ENCODE measurements at regions of chr12 and their contacts with region 1.

Region 1: GRCh38 chr12:111812881-111813741 is 28.9 kb upstream of the MAPKAPK5 start:
- DNase-seq: peak; percentile 44
- ATAC-seq: peak; percentile 99
- H3K4me3 ChIP-seq: no peak overlapping the region
- H3K27ac ChIP-seq: no peak overlapping the region
- H3K4me1 ChIP-seq: peaks cover 3% of the 10 kb centered on the region; the same call in 1 of the 2 replicates
- H3K27me3 ChIP-seq: no peaks in the 10 kb centered on the region
- CTCF ChIP-seq: peak; percentile 80 to 89 (median 80)
- EP300 ChIP-seq: no peak
- POLR2A ChIP-seq: no peak
- RAD21 ChIP-seq: peak; percentile 83

Region 2: GRCh38 chr12:111685744-111686517 is 127.2 kb before region 1 on chr12 and contains the starts of genes ACAD10 and BRAP:
- CTCF ChIA-PET with region 1: interaction called, 17 read pairs
- POLR2A ChIA-PET with region 1: interaction called, 3 read pairs
- RAD21 ChIA-PET with region 1: interaction called, 10 read pairs
- SMC1A ChIA-PET with region 1: interaction called, 12 read pairs
- in situ Hi-C with region 1: loop called (anchors 5 kb)
- intact Hi-C with region 1: loop called (anchors 2 kb)
- DNase-seq: peak; percentile 89
- ATAC-seq: peak; percentile 98
- H3K4me3 ChIP-seq: peak within 1 kb of the TSS; percentile 99
- H3K27ac ChIP-seq: peak within 1 kb of the TSS; percentile 63
- H3K4me1 ChIP-seq: peaks cover 8% of the 10 kb centered on the region
- H3K27me3 ChIP-seq: no peaks in the 10 kb centered on the region
- CTCF ChIP-seq: peak in 2 of 3 experiments; percentile 8 to 13; a peak in 1 of 6 replicates
- EP300 ChIP-seq: no peak
- POLR2A ChIP-seq: peak; percentile 99
- RAD21 ChIP-seq: no peak
- polyA plus RNA-seq, gene ACAD10: 2.9 to 3.4 TPM
- polyA plus RNA-seq, gene BRAP: 2.3 to 3.4 TPM

Region 3: DNA sequence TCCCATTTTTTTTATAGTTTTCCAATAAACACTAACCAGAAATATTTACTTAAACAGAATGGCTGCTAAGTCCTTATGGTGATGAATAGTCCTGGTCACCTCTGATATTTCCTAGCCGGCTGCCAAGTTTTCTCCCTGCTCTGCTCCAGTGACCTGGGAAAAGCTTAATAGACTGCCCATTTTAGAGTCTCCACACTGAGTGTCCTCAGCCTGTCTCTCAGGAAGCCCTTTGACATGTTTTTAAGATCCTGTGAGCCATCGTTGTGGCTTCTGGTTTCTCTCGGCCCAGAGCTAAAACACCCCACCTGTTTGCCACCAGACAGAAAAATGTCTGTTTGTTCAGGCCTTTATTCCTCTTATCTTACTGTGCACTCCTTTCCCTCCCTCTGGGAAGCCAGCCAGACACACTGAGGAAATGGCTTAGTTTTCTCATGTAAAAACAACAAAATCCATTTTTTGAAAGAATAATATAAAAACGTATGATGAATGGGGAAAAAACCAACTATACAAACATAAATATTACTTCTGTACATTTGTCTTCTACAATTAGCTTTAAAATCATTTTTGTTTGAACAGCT is 71.8 kb before region 1 on chr12:
- CTCF ChIA-PET with region 1: interaction called, 11 read pairs
- POLR2A ChIA-PET with region 1: no interaction called
- RAD21 ChIA-PET with region 1: interaction called, 6 read pairs
- SMC1A ChIA-PET with region 1: interaction called, 4 read pairs
- in situ Hi-C with region 1: no loop called
- intact Hi-C with region 1: no loop called
- DNase-seq: no peak
- ATAC-seq: no peak
- H3K4me3 ChIP-seq: no peak overlapping the region
- H3K27ac ChIP-seq: no peak overlapping the region
- H3K4me1 ChIP-seq: no peaks in the 10 kb centered on the region
- H3K27me3 ChIP-seq: no peaks in the 10 kb centered on the region
- CTCF ChIP-seq: no peak
- EP300 ChIP-seq: no peak
- POLR2A ChIP-seq: no peak
- RAD21 ChIP-seq: no peak

Region 4: DNA sequence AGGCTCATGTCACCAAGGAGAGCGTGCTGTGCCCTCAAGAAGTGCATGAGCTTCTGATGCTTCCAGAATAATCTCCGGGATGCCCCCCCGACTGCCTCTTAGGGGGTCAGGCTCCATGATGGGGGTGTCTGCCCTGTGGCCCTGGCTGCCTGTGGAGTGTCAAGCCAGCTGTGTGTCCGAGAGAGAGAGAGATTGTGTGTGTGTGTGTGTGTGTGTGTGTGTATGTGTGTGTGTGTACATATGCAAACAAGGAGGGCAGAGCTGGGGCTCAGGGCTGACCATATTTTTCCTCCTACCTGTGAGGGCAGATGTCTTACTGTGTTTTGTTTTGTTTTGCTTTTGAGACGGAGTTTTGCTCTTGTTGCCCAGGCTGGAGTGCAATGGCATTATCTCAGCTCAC is 52.0 kb before region 1 on chr12:
- CTCF ChIA-PET with region 1: interaction called, 170 read pairs
- POLR2A ChIA-PET with region 1: interaction called, 4 read pairs
- RAD21 ChIA-PET with region 1: interaction called, 17 read pairs
- SMC1A ChIA-PET with region 1: interaction called, 15 read pairs
- in situ Hi-C with region 1: loop called (anchors 10 kb)
- intact Hi-C with region 1: loop called (anchors 1 kb)
- DNase-seq: no peak
- ATAC-seq: peak; percentile 54
- H3K4me3 ChIP-seq: peak overlapping the region; percentile 25; the same call in 1 of the 2 replicates
- H3K27ac ChIP-seq: peak overlapping the region; percentile 63; the same call in 1 of the 2 replicates
- H3K4me1 ChIP-seq: peaks cover 67% of the 10 kb centered on the region
- H3K27me3 ChIP-seq: no peaks in the 10 kb centered on the region
- CTCF ChIP-seq: no peak
- EP300 ChIP-seq: no peak; a peak in 1 of 4 replicates
- POLR2A ChIP-seq: no peak
- RAD21 ChIP-seq: no peak

Region 5: DNA sequence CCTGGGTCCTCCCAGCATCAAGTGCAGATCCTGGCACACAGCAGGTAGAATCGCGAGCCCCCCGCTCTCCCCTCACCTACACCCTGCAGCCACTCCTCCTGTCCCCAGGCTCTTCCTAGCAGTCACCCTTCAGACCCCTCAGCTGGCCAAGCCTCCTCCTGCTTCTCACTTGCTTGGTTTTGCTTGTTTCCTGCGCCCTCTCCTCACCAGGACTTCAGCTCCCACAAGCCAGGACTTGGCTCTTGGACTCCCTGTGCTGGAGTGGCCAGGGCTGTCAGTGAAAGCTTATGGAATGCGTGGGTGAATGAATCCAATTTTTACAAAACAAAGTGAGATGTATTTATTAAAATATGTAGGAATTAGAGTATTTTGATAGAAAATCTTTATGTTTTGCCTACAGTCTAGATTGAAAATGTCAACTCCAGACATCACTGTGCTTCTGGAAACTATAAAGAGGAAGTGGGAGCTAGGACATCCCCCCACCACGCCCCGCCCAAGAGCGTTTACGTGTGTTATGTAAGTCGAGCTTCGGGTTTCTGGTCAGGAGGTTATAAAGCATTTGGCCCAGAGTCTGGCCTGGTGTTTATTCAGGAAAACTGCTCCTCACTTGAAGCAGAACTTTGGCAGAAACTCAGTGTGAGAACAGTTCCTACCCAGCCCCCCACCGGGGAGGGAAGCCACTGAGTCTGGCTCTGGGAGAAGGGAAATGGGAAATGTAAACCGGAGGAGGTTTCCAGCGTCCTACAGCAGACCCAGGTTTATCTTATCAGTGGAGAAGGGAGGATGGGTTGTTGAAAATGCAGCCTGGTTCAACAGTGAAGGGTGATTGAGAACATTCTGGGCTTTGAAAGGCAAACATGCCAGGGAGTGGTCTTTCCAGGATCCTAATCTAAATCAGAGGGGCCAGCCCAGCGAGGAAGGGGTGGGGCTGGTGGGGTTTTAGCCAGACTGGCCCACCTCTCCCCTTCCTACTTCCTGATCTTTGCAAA is 37.6 kb before region 1 on chr12:
- CTCF ChIA-PET with region 1: interaction called, 15 read pairs
- POLR2A ChIA-PET with region 1: no interaction called
- RAD21 ChIA-PET with region 1: interaction called, 10 read pairs
- SMC1A ChIA-PET with region 1: interaction called, 12 read pairs
- in situ Hi-C with region 1: no loop called
- intact Hi-C with region 1: no loop called
- DNase-seq: peak; percentile 70
- ATAC-seq: peak; percentile 91
- H3K4me3 ChIP-seq: peak overlapping the region; percentile 57; the same call in 1 of the 2 replicates
- H3K27ac ChIP-seq: peak overlapping the region; percentile 86
- H3K4me1 ChIP-seq: peaks cover 34% of the 10 kb centered on the region
- H3K27me3 ChIP-seq: no peaks in the 10 kb centered on the region
- CTCF ChIP-seq: no peak
- EP300 ChIP-seq: peak; percentile 53 to 83
- POLR2A ChIP-seq: peak; percentile 62
- RAD21 ChIP-seq: no peak

Region 6: DNA sequence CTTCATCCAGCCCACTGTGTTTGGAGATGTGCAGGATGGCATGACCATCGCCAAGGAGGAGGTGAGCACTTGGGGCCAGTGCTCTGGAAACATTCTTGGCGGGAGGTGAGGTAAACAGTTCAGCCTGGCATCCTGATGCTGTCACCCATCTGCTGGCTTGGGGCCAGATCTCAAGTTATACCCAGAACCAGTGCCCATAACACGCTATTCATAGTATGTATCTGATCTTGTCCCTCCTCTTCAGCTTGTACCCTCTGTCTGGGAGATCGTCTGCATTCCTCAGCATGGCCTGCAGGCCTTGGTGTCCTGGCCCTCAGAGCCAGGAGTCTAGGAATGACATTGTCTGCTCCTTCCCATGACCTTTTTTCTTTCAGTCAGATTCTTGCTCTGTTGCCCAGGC is 14.9 kb before region 1 on chr12:
- CTCF ChIA-PET with region 1: interaction called, 14 read pairs
- POLR2A ChIA-PET with region 1: no interaction called
- RAD21 ChIA-PET with region 1: interaction called, 8 read pairs
- SMC1A ChIA-PET with region 1: interaction called, 8 read pairs
- in situ Hi-C with region 1: no loop called
- intact Hi-C with region 1: no loop called
- DNase-seq: no peak
- ATAC-seq: no peak
- H3K4me3 ChIP-seq: no peak overlapping the region
- H3K27ac ChIP-seq: no peak overlapping the region
- H3K4me1 ChIP-seq: no peaks in the 10 kb centered on the region
- H3K27me3 ChIP-seq: no peaks in the 10 kb centered on the region
- CTCF ChIP-seq: no peak
- EP300 ChIP-seq: no peak
- POLR2A ChIP-seq: no peak
- RAD21 ChIP-seq: no peak

Region 7: DNA sequence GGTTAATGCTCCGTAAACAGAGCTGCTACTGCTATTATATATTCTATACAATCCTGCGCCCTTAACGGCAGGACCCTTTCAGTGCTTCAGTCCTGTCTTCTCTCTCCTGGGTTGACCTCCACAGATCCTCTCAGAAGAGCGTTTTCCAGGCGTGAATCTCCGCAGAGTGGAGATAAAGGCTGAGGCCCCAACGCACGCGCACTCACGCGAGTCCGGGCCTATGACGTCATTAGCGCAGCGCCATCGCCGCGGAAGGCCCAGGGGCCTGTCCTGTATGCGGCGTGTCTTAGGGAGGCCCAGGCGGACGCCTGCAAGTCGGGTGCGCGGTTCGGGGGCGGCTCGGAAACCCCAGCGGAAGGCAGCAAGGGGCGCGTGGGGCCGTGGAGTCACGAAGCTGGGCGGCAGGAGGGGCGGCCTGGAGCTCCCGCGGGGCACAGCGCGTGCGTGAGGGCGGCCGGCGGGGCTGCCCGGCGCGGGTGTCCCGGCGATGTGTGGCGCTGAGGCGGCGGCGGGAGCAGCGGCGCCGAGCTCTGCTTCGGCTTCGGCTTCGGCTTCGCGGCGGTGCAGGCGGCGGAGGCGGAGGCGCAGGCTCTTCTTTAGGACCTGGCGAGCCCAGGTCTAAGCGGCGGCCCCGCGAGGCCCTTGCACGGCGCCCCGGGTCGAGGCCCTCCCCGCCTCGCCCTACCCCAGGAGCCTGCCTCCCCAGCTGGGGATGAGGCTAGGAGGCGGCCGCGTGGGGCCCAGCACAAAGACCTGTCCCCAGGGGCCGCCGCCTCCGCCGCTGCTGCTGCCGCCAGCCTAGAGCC is 28.8 kb after region 1 on chr12 and contains the start of gene MAPKAPK5:
- CTCF ChIA-PET with region 1: interaction called, 14 read pairs
- POLR2A ChIA-PET with region 1: no interaction called
- RAD21 ChIA-PET with region 1: interaction called, 5 read pairs
- SMC1A ChIA-PET with region 1: interaction called, 8 read pairs
- in situ Hi-C with region 1: no loop called
- intact Hi-C with region 1: no loop called
- DNase-seq: peak; percentile 85
- ATAC-seq: peak; percentile 83
- H3K4me3 ChIP-seq: peak within 1 kb of the TSS; percentile 97
- H3K27ac ChIP-seq: peak within 1 kb of the TSS; percentile 88
- H3K4me1 ChIP-seq: no peaks in the 10 kb centered on the region
- H3K27me3 ChIP-seq: no peaks in the 10 kb centered on the region
- CTCF ChIP-seq: no peak
- EP300 ChIP-seq: 0 out of 4 replicates have a peak, but pooled peaks of 1 of the 2 experiments have one; percentile 49
- POLR2A ChIP-seq: peak; percentile 92
- RAD21 ChIP-seq: no peak
- polyA plus RNA-seq, gene MAPKAPK5: 12.6 to 14.4 TPM

Region 8: DNA sequence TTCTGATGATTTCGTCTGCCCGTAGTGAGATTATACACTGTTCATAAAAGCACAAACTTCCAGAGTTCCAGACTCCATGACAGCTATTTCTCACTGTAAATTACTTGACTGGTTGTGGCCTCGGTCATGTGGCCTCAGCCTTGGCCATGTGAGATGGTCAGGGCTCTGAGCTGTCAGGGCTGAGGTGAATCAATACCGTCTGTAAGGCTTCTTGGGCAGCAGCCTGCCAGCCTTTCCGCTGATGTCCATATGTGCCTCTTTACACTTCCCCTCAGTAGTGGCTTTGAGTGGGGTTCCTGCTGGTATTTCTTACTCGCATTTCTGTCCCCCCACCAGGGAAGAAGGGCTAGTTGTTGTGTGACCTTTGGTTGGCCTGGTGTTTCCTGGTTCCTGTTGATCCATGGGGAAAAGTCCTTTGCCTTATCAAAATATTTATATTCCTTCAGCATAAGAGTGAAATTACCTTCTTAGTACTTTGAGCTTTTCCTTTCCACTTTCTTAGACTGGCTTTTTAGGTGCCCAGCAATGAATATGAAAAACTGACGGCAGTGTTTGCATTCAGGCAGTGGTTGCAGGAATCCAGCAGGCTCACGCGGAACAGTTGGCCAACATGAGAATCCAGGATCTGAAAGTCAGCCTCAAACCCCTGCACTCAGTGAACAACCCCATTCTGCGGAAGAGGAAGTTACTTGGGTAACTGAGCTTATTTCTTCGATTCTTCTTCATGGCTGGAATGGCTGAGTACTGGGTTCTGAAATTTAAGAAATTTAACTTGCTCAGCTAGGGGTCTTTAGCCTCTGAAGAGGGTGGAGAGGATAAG is 75.0 kb after region 1 on chr12:
- CTCF ChIA-PET with region 1: no interaction called
- POLR2A ChIA-PET with region 1: no interaction called
- RAD21 ChIA-PET with region 1: no interaction called
- SMC1A ChIA-PET with region 1: no interaction called
- in situ Hi-C with region 1: no loop called
- intact Hi-C with region 1: no loop called
- DNase-seq: no peak
- ATAC-seq: no peak
- H3K4me3 ChIP-seq: no peak overlapping the region
- H3K27ac ChIP-seq: no peak overlapping the region
- H3K4me1 ChIP-seq: no peaks in the 10 kb centered on the region
- H3K27me3 ChIP-seq: no peaks in the 10 kb centered on the region
- CTCF ChIP-seq: no peak
- EP300 ChIP-seq: no peak
- POLR2A ChIP-seq: no peak
- RAD21 ChIP-seq: no peak

Region 9: DNA sequence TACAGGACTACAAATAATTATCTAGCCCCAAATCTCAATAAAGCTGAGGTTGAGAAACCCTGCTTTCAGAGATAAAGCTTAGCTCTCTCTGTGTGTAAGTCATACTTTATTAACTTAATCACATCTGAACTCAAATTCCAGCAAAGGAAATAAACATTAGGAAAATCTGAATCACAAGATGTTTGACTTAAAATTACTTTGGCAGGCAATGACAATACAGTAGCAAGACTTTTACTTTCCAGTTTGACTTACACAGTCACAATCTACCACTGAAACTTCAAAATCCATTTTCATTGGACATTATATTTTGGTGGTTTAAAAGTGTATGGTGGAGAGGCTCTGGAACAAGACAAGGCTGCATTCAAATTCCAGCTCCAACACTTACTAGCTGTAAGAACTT is 188.5 kb after region 1 on chr12:
- CTCF ChIA-PET with region 1: no interaction called
- POLR2A ChIA-PET with region 1: no interaction called
- RAD21 ChIA-PET with region 1: no interaction called
- SMC1A ChIA-PET with region 1: no interaction called
- in situ Hi-C with region 1: no loop called
- intact Hi-C with region 1: no loop called
- DNase-seq: no peak
- ATAC-seq: no peak
- H3K4me3 ChIP-seq: no peak overlapping the region
- H3K27ac ChIP-seq: no peak overlapping the region
- H3K4me1 ChIP-seq: peaks cover 18% of the 10 kb centered on the region
- H3K27me3 ChIP-seq: no peaks in the 10 kb centered on the region
- CTCF ChIP-seq: no peak
- EP300 ChIP-seq: no peak
- POLR2A ChIP-seq: no peak
- RAD21 ChIP-seq: no peak

Measured in GM12878 (cell line).